ENCODE measurements at regions of chr9 and their contacts with region 1.

Region 1: DNA sequence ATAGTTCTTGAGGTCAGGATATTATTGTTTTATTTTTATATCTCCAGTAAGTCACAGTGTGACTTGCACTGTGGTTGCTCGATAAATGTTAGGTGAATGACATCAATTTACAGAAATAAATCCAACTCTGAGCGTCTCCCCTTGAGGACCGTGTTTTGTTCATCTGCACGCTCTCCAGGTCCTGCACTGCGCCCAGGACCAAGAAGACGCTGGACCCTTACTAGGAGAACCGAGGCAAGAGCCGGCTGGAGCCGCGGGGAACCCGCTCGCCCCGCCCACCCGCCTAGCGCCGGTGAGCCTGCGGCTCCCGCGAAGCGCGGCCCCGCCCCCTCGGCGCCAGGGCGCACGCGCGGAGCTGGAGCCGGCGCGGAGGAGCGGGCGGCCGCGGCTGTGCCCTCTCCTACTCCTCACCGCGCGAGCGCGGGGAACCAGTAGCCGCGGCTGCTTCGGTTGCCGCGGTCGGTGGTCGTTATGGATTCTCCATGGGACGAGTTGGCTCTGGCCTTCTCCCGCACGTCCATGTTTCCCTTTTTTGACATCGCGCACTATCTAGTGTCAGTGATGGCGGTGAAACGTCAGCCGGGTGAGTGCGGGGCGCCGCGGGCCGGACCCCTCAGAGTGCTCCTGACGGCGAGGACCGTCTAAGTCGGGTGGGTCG is at the start of gene TMEM38B:
- DNase-seq: peak; percentile 85
- ATAC-seq: peak; percentile 80
- H3K4me3 Mint-ChIP-seq: peak within 1 kb of the TSS; percentile 89
- H3K27ac Mint-ChIP-seq: peak within 1 kb of the TSS; percentile 84
- H3K4me1 Mint-ChIP-seq: peaks cover 23% of the 10 kb centered on the region
- H3K27me3 Mint-ChIP-seq: peaks cover 19% of the 10 kb centered on the region
- CTCF ChIP-seq: no peak
- total RNA-seq, gene TMEM38B: 10.9 and 12.7 TPM in 2 replicates

Region 2: DNA sequence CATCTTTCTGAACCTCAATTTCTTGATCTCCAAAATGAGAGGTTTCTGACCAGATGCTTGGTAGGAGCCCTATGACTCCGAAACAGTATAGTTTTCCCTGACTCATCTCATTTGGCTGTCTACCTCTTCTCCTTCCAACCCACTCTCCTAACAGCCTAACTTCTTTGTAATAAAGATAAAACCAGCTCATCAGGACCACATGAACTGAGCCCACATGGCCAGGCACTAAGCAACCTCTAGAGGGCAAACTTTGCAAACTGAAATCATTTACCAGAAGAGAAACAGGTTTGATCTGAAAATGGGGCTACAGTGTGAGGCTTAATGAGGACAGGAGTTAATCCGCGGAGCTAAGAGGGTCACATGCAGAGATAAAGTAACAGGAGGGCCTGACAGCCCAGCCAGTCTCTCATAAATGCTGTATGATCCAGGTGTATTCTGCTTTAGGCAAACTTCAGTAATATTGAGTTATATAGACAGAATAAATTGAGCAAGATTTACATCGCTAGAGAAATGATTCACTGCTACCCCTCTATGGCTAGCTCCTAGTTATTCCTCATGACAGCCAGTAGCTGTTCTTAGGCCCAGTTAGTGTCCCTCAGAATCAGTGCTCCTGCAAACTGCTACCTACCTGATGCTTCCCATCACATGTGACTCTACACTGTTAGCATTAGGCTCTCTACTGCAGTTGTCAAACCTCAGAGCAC is 831.0 kb before region 1 on chr9:
- CTCF ChIA-PET with region 1: no interaction called
- POLR2A ChIA-PET with region 1: no interaction called
- intact Hi-C with region 1: loop called (anchors 10 kb)
- DNase-seq: no peak
- ATAC-seq: peak; percentile 74
- H3K4me3 Mint-ChIP-seq: no peak overlapping the region
- H3K27ac Mint-ChIP-seq: no peak overlapping the region
- H3K4me1 Mint-ChIP-seq: peaks cover 53% of the 10 kb centered on the region
- H3K27me3 Mint-ChIP-seq: no peaks in the 10 kb centered on the region
- CTCF ChIP-seq: no peak

Region 3: GRCh38 chr9:105447814-105448812 is 246.2 kb before region 1 on chr9 and contains the start of gene FSD1L:
- CTCF ChIA-PET with region 1: no interaction called
- POLR2A ChIA-PET with region 1: interaction called, 3 read pairs
- intact Hi-C with region 1: loop called (anchors 2 kb)
- DNase-seq: peak; percentile 89
- ATAC-seq: peak; percentile 92
- H3K4me3 Mint-ChIP-seq: peak within 1 kb of the TSS; percentile 90
- H3K27ac Mint-ChIP-seq: peak within 1 kb of the TSS; percentile 75
- H3K4me1 Mint-ChIP-seq: peaks cover 17% of the 10 kb centered on the region
- H3K27me3 Mint-ChIP-seq: no peaks in the 10 kb centered on the region
- CTCF ChIP-seq: no peak
- total RNA-seq, gene FSD1L: 10.2 and 12.4 TPM in 2 replicates

Region 4: GRCh38 chr9:105656131-105656921 is 38.0 kb before region 1 on chr9:
- CTCF ChIA-PET with region 1: interaction called, 3 read pairs
- POLR2A ChIA-PET with region 1: interaction called, 4 read pairs
- intact Hi-C with region 1: loop called (anchors 1 kb)
- DNase-seq: peak; percentile 31
- ATAC-seq: peak; percentile 72
- H3K4me3 Mint-ChIP-seq: peak overlapping the region; percentile 87
- H3K27ac Mint-ChIP-seq: no peak overlapping the region
- H3K4me1 Mint-ChIP-seq: peaks cover 18% of the 10 kb centered on the region
- H3K27me3 Mint-ChIP-seq: peaks cover 17% of the 10 kb centered on the region
- CTCF ChIP-seq: no peak

Region 5: DNA sequence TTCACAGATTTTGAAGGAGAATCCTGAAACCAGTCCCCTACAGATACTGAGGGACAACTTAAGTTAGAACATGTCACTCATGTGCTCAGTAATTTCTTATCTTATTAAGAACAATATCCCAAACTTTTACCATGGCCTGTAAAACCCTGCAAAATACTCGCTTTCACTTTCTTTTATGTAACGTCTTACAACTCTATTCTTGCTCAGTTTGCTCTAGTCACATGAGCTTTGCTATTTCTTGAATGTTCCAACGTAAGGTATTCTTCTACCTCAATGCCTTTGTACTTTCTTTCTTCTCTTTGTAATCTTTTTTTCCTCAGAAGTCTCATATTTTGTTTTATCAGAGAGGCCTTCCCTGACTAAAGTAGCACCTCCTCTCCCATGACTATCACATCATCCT is 14.1 kb after region 1 on chr9:
- CTCF ChIA-PET with region 1: no interaction called
- POLR2A ChIA-PET with region 1: interaction called, 4 read pairs
- intact Hi-C with region 1: loop called (anchors 1 kb)
- DNase-seq: no peak
- ATAC-seq: no peak
- H3K4me3 Mint-ChIP-seq: no peak overlapping the region
- H3K27ac Mint-ChIP-seq: peak overlapping the region; percentile 13
- H3K4me1 Mint-ChIP-seq: peaks cover 4% of the 10 kb centered on the region
- H3K27me3 Mint-ChIP-seq: no peaks in the 10 kb centered on the region
- CTCF ChIP-seq: no peak